Pancreas (tissue), 10 donors: ENCODE measurements at regions of chr1 and their contacts with region 1.

Region 1: GRCh38 chr1:200620273-200621131 is at the start of gene KIF14:
- DNase-seq: peak; percentile 88 to 94 (median 90)
- ATAC-seq: peak; percentile 98 to 100 (median 100)
- H3K4me3 ChIP-seq: peak within 1 kb of the TSS; percentile 36 to 79 (median 53)
- H3K27ac ChIP-seq: peak within 1 kb of the TSS in 3 of 4 donors; percentile 10 to 46 (median 17)
- H3K4me1 ChIP-seq: peaks cover 0 to 16% (median 0%) of the 10 kb centered on the region in 3 donors
- H3K27me3 ChIP-seq: no peaks in the 10 kb centered on the region
- CTCF ChIP-seq: no peak
- total RNA-seq, gene KIF14: 0.04 to 0.22 (median 0.15) TPM in 5 of 6 donors, not detected in the other

Region 2: GRCh38 chr1:200550367-200550766 is 70.1 kb before region 1 on chr1:
- intact Hi-C with region 1: no loop called
- DNase-seq: no peak
- ATAC-seq: peak in 1 of 4 donors; percentile 43
- H3K4me3 ChIP-seq: no peak overlapping the region
- H3K27ac ChIP-seq: no peak overlapping the region
- H3K4me1 ChIP-seq: peaks cover 0 to 13% (median 11%) of the 10 kb centered on the region in 3 donors
- H3K27me3 ChIP-seq: no peaks in the 10 kb centered on the region
- CTCF ChIP-seq: no peak

Region 3: DNA sequence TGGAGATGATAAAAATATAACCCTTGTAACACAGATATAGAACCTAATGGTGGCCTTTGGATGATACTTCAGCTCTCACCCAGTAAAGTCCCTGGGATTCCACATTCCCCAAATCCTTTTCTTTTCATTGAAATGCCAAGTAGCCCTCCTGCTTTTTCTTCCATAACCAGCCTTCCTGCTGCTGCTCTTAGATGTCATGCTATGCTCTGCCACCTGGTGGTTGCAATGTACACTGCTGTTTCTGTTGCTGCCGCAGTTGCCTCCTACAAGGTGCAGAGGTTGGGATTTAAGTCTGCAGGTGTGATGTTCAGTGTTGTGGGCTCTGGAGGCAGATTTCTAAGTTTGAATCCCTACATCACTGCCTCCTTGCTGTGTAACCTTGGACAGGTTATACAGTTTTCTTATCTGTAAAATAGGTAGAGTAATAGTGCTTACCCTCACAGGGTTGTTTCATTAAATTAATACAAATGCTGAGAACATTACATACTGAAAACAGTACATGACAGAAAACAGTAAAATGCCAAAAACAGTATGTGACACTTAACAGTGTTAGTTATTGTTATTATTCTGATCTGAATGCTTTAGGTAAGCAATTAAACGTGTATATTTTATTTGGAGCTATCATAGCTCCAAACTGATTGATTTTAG is 182.5 kb after region 1 on chr1:
- intact Hi-C with region 1: loop called in 2 of 3 experiments (anchors 10 kb)
- DNase-seq: peak; percentile 64 to 84 (median 68)
- ATAC-seq: peak; percentile 85 to 100 (median 98)
- H3K4me3 ChIP-seq: no peak overlapping the region
- H3K27ac ChIP-seq: no peak overlapping the region
- H3K4me1 ChIP-seq: peaks cover 0 to 6% (median 2%) of the 10 kb centered on the region in 3 donors
- H3K27me3 ChIP-seq: no peaks in the 10 kb centered on the region
- CTCF ChIP-seq: peak; percentile 69 to 84 (median 74)